Activated CD4-positive, alpha-beta T cell treated with anti-CD3 and anti-CD28 coated beads for 36 hours (primary cell): ENCODE measurements at regions of chr4 and their contacts with region 1.

Region 1: DNA sequence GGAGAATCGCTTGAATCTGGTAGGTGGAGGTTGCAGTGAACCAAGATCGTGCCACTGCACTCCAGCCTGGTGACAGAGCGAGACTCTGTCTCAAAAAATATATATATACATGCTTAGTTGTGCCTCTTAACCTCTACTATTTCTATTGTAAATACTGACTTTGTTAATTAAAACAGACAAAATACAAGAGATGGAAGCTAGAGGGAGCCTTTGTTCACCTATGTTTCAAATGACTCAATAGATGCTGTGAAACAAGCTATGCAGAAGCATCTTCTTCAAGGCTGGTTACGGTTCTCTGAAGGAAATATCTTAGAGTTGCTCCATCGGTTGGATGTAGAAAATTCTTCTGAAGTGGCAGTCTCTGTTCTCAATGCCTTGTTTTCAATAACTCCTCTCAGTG is 6.2 kb downstream of the NCAPG start:
- DNase-seq: no peak
- ATAC-seq: peak; percentile 84
- H3K4me3 Mint-ChIP-seq: no peak overlapping the region
- H3K27ac Mint-ChIP-seq: no peak overlapping the region
- H3K4me1 Mint-ChIP-seq: peaks cover 12% of the 10 kb centered on the region
- H3K27me3 Mint-ChIP-seq: no peaks in the 10 kb centered on the region

Region 2: GRCh38 chr4:18366892-18367291 is 549.9 kb after region 1 on chr4:
- CTCF ChIA-PET with region 1: no interaction called
- POLR2A ChIA-PET with region 1: no interaction called
- intact Hi-C with region 1: loop called in 1 of 2 experiments (anchors 1 kb)
- DNase-seq: peak; percentile 6
- ATAC-seq: peak; percentile 78
- H3K4me3 Mint-ChIP-seq: no peak overlapping the region
- H3K27ac Mint-ChIP-seq: no peak overlapping the region
- H3K4me1 Mint-ChIP-seq: no peaks in the 10 kb centered on the region
- H3K27me3 Mint-ChIP-seq: peaks cover 17% of the 10 kb centered on the region